Activated CD4-positive, alpha-beta memory T cell treated with anti-CD3 and anti-CD28 coated beads for 36 hours (primary cell): ENCODE measurements at regions of chr2 and their contacts with region 1.

Region 1: GRCh38 chr2:160353166-160353565 is 140.4 kb downstream of the RBMS1 start:
- DNase-seq: peak; percentile 48
- H3K4me3 Mint-ChIP-seq: no peak overlapping the region
- H3K27ac Mint-ChIP-seq: no peak overlapping the region
- H3K4me1 Mint-ChIP-seq: peaks cover 64% of the 10 kb centered on the region
- H3K27me3 Mint-ChIP-seq: no peaks in the 10 kb centered on the region

Region 2: DNA sequence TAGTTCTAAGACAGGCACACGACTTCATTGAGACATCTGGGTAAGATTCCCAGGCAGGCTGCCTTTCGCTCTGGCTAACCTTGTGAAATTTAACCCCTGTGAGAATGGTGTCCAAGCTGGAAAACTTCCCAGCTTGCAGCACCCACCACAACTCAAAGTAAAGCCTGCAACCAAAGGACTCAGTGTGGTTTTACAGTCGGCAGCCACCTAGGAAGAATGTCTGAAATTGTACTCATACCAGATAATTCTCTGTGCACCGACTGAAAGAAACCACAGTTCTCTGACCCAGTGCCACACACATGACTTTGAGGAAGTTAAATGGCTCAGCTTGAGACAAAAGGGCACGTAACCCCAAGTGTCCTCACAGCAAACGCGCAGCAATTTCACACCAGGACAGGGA is 14.7 kb after region 1 on chr2:
- CTCF ChIA-PET with region 1: no interaction called
- POLR2A ChIA-PET with region 1: interaction called, 3 read pairs
- intact Hi-C with region 1: loop called (anchors 2 kb)
- DNase-seq: no peak
- H3K4me3 Mint-ChIP-seq: no peak overlapping the region
- H3K27ac Mint-ChIP-seq: no peak overlapping the region
- H3K4me1 Mint-ChIP-seq: peaks cover 73% of the 10 kb centered on the region
- H3K27me3 Mint-ChIP-seq: no peaks in the 10 kb centered on the region

Region 3: DNA sequence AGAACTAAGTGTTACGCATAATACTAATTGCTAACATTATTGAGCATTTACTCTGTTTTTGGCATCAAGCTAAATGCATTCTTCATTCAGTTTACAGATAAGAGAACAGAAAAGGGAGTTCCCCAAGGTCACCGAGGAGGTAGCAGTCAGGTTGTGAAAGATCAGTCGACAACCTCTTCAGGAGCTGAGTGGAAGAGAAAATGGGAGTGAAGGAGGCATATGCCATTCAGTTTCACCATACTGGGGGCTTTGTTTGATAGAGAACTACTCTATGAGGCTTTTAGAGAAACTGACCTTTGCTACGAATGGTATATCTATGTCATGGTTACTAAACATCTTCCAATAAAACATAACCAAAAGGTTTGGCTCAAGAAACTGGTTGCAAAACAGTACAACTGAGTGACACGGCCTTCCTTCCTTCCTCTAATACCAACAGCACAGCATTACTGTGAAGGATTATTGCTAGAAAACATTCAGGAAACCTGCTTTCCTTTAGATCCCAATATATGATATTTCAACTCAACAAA is 28.3 kb after region 1 on chr2:
- CTCF ChIA-PET with region 1: no interaction called
- POLR2A ChIA-PET with region 1: no interaction called
- intact Hi-C with region 1: no loop called
- DNase-seq: no peak
- H3K4me3 Mint-ChIP-seq: no peak overlapping the region
- H3K27ac Mint-ChIP-seq: peak overlapping the region; percentile 31
- H3K4me1 Mint-ChIP-seq: peaks cover 74% of the 10 kb centered on the region
- H3K27me3 Mint-ChIP-seq: no peaks in the 10 kb centered on the region

Region 4: DNA sequence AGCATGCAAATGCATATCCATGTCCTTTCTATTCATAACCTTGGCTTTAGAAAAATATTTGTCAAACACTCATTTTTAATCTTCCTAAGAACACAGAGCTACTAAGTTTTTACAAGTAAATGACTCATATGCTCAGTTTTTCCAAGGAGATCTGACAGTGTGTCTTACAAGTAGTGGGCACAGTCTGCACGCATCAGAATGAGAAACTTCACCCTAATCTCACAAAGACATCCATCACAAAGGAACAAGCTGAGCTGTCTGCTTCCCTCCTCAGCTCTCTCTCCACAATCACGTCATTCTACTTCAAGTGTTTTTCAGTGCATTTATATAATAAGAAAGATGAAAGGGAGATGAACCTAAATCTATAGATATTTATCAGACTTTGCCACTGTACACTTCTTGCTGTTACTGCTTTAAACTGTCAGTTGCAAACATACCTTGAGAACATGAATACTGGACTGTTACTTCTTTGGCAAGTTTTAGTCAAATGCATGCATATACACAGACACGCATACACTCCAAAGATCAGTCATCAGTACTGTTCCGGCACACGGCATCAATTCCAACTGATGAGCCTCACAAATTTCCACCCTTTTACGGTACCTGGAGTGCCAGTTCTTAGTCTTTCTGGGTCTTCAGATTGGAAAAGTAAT is 64.7 kb after region 1 on chr2:
- CTCF ChIA-PET with region 1: no interaction called
- POLR2A ChIA-PET with region 1: no interaction called
- intact Hi-C with region 1: no loop called
- DNase-seq: peak; percentile 52
- H3K4me3 Mint-ChIP-seq: peak overlapping the region; percentile 31
- H3K27ac Mint-ChIP-seq: peak overlapping the region; percentile 82
- H3K4me1 Mint-ChIP-seq: peaks cover 63% of the 10 kb centered on the region
- H3K27me3 Mint-ChIP-seq: no peaks in the 10 kb centered on the region

Region 5: DNA sequence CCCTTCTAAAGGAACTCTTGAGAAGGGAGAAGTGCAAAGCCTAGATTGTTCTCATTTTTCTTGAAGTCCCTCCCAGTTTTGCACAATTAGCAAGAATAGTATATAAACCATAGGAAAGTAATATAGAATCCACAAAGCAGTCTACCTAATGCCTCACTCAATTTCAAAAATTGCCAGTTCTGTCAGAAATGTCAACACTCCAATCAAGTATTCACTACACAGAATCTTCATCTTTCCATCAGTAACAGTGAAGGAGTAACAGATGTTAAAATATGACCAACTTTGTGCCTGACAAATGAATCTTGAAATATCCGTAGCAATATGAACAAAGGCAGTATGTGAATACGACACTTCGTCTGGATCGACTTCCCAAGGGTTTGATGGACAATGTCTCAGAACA is 84.1 kb after region 1 on chr2:
- CTCF ChIA-PET with region 1: no interaction called
- POLR2A ChIA-PET with region 1: no interaction called
- intact Hi-C with region 1: no loop called
- DNase-seq: no peak
- H3K4me3 Mint-ChIP-seq: no peak overlapping the region
- H3K27ac Mint-ChIP-seq: no peak overlapping the region
- H3K4me1 Mint-ChIP-seq: peaks cover 24% of the 10 kb centered on the region
- H3K27me3 Mint-ChIP-seq: no peaks in the 10 kb centered on the region

Region 6: DNA sequence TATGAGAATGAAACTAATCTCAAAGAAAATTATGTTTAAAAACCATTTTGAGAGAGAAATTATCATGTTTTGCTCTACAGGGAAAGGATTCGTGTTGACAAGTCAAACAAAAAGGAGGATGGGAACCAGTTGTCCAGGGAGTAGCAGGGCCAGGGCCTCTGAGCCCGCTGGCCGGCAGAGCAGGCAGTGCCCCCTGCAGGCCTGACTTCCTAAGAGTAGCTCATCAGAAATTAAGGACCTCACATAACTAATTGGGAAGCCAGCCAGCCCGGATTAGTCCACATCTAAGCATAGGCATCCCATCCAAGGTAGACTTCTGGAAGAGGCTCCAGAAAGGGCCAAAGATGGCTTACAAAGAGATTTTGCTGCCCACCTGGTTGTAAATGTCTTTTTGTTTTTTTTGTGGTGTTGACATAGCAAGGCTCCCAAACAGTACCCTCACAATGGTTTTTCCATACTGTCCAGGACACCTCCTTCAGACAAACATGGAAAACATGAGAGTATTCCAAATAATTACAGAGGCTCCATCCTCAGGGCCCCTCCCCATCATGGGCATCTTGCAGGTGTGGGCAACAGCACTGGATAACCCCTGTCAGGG is 565.8 kb after region 1 on chr2:
- CTCF ChIA-PET with region 1: no interaction called
- POLR2A ChIA-PET with region 1: no interaction called
- intact Hi-C with region 1: loop called (anchors 5 kb)
- DNase-seq: peak; percentile 49
- H3K4me3 Mint-ChIP-seq: no peak overlapping the region
- H3K27ac Mint-ChIP-seq: no peak overlapping the region
- H3K4me1 Mint-ChIP-seq: no peaks in the 10 kb centered on the region
- H3K27me3 Mint-ChIP-seq: no peaks in the 10 kb centered on the region